ENCODE measurements at regions of chr2 and their contacts with region 1.

Region 1: DNA sequence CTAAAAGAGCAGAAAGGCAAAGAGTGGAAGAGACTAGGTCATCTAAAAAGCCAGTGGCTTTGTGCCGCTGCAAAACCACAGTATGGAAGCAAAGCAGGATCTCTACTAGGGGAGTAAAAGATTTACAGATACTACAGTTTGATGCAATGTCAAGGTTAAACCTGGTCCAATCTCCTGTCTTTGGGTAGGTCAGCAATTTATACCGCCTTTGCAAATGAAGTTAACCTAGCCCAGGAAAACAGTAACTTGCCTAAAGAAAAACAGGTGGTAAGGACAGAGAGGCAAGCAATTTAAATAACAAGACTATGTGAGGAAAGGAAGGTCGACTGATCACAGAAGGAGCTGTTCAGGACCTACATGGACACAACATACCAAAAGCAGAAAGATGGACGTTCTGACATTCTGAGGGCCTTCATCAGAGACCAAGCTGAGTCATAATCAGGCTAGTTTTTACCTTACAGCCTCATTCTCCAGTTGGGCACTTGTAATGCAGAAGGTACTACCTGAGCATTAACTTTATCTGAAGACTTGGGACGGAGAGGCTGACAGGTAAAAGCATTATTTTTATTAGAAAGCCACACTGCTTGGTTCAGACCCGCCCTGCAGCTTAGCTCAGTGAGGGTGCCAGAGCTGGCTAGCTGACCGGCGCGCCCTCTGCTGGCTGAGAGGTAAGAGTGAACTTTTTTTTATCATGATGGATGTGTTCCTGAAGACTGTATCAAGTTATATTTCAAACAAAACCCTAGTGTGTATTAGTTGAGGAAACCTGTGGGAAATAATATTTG is 15.9 kb downstream of the CDKL4 start:
- H3K4me3 ChIP-seq: no peak overlapping the region
- H3K27ac ChIP-seq: no peak overlapping the region
- H3K4me1 ChIP-seq: no peaks in the 10 kb centered on the region
- CTCF ChIP-seq: peak; percentile 61

Region 2: GRCh38 chr2:38947240-38948239 is 280.3 kb before region 1 on chr2:
- CTCF ChIA-PET with region 1: interaction called, 116 read pairs
- POLR2A ChIA-PET with region 1: interaction called, 4 read pairs
- H3K4me3 ChIP-seq: no peak overlapping the region
- H3K27ac ChIP-seq: no peak overlapping the region
- H3K4me1 ChIP-seq: peaks cover 9% of the 10 kb centered on the region
- CTCF ChIP-seq: peak; percentile 78

Region 3: GRCh38 chr2:38954986-38955385 is 272.8 kb before region 1 on chr2:
- CTCF ChIA-PET with region 1: interaction called, 116 read pairs
- POLR2A ChIA-PET with region 1: no interaction called
- H3K4me3 ChIP-seq: no peak overlapping the region
- H3K27ac ChIP-seq: no peak overlapping the region
- H3K4me1 ChIP-seq: no peaks in the 10 kb centered on the region
- CTCF ChIP-seq: no peak

Region 4: GRCh38 chr2:39059366-39059952 is 168.4 kb before region 1 on chr2:
- CTCF ChIA-PET with region 1: interaction called, 221 read pairs
- POLR2A ChIA-PET with region 1: no interaction called
- H3K4me3 ChIP-seq: no peak overlapping the region
- H3K27ac ChIP-seq: no peak overlapping the region
- H3K4me1 ChIP-seq: peaks cover 2% of the 10 kb centered on the region
- CTCF ChIP-seq: 0 out of 2 replicates have a peak, but pooled peaks have one; percentile 36

Region 5: GRCh38 chr2:39069136-39069515 is 158.7 kb before region 1 on chr2:
- CTCF ChIA-PET with region 1: interaction called, 221 read pairs
- POLR2A ChIA-PET with region 1: no interaction called
- H3K4me3 ChIP-seq: no peak overlapping the region
- H3K27ac ChIP-seq: no peak overlapping the region
- H3K4me1 ChIP-seq: peaks cover 15% of the 10 kb centered on the region
- CTCF ChIP-seq: no peak

Region 6: GRCh38 chr2:39124000-39124745 is 103.6 kb before region 1 on chr2:
- CTCF ChIA-PET with region 1: interaction called, 47 read pairs
- POLR2A ChIA-PET with region 1: interaction called, 5 read pairs
- H3K4me3 ChIP-seq: peak overlapping the region; percentile 78
- H3K27ac ChIP-seq: peak overlapping the region; percentile 61
- H3K4me1 ChIP-seq: peaks cover 8% of the 10 kb centered on the region
- CTCF ChIP-seq: peak; percentile 91